ENCODE measurements at regions of chr19 and their contacts with region 1.

Region 1: GRCh38 chr19:588093-588740 is 1.5 kb upstream of the HCN2 start:
- DNase-seq: peak; percentile 91

Region 2: DNA sequence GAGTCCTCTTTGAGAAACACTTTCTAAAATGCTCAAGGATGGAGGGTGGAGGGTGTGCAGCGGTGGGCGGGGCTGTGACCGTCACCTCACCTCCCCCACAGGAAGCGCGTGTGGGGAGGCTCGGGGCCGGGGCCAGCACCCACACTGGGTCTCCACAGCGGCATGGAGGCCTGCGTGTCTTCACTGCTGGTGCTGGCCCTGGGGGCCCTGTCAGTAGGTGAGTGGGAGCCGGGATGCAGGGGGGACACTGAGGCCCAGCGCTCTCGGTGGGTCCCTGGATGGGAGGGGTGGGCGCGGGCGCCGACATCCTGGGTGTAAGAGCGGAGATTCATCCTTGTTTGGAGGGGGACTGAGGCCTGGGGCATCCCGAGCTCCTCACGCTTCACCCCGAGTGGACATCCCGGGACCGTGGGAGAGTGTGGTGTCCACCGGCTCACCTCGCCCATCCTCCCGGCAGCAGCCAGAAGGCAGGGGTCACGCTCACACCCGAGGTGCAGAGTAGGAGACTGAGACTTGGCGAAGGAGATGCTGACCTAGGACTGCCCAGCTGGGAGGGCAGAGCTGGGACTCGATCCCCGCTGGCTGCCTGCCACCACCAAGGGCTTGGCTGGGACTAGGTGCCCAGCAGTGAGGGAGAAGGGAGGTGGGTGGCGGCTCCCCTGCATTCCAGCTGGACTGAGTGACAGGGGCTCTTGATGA is 44.2 kb before region 1 on chr19 and contains the start of gene GZMM:
- intact Hi-C with region 1: no loop called
- DNase-seq: no peak
- total RNA-seq, gene GZMM: 0.74 to 0.76 TPM

Region 3: DNA sequence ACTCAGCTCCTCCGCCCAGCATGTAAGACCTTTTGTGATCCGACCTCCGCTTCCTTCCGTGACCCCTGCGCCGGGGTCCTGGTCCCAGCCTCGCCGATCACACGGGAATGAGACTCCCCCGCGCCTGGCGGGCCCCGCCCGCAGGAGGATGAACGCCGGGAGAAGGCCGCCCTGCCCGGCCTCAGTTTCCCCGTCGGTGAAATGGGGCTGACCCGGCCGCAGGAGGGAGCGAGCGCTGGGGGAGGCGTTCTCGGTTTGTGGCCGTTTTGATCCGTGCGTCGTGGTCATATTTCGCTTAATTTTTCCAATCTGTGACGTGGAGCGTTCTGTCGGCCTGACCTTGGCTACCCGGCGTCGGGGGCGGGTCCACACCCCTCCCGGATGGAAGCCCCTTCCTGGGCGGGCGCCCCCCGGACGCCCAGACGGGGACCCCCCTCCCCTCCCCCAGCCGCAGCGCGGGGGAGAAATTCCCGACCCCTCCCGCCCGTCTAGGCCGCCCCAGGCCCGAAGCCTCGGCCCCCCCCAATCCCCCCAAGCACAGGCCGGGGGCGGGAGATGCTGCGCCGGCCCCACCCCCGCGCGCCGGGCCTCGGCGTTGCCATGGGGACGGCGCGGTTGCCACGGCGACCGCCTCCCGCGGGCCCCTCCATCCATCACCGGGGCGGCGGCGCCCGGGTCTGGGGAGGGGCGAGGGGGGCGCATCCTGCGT is 131.6 kb after region 1 on chr19:
- intact Hi-C with region 1: loop called in 1 of 2 experiments (anchors 10 kb)
- DNase-seq: no peak